Mammary epithelial cell (primary cell): ENCODE measurements at regions of chr17 and their contacts with region 1.

Region 1: DNA sequence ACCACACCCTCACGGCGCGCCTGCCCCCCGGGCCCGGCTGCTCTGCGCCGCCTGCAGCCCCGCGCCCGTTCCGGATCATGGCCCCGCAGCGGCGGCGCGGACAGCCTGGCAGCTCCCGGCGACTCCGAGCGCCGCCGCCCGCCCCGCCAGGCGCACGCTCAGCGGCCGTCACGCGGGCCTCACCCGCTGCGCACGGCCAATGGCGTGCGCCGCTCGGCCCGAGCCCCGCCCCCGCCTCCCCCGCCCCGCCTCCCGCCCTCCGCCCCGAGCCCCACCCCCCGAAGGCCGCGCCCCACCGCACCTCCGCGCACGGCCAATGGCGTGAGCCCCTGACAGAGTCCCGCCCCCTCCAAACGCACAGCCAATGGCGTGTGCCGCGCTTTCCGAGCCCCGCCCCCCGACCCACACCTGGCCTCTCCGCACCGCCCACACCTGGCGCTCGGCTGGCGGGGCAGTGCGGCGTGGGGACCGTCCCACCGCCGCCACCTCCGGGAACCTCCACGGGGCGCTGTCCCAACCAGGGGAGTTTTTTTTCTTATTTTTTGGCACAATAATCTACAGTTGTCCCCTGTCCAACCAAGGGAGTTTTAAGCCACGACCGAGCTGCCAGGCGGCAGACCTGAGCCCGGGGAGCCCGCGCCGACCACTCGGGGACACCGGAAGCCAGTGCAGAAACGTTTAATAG is at the start of gene PCYT2:
- DNase-seq: peak; percentile 85
- H3K4me3 ChIP-seq: peak within 1 kb of the TSS; percentile 81 to 92 (median 83)
- H3K27ac ChIP-seq: peak within 1 kb of the TSS; percentile 19
- H3K4me1 ChIP-seq: peaks cover 12% of the 10 kb centered on the region
- H3K27me3 ChIP-seq: no peaks in the 10 kb centered on the region
- CTCF ChIP-seq: peak in 1 of 2 donors; percentile 2
- total RNA-seq, gene PCYT2: 23.5 to 48.7 TPM

Region 2: DNA sequence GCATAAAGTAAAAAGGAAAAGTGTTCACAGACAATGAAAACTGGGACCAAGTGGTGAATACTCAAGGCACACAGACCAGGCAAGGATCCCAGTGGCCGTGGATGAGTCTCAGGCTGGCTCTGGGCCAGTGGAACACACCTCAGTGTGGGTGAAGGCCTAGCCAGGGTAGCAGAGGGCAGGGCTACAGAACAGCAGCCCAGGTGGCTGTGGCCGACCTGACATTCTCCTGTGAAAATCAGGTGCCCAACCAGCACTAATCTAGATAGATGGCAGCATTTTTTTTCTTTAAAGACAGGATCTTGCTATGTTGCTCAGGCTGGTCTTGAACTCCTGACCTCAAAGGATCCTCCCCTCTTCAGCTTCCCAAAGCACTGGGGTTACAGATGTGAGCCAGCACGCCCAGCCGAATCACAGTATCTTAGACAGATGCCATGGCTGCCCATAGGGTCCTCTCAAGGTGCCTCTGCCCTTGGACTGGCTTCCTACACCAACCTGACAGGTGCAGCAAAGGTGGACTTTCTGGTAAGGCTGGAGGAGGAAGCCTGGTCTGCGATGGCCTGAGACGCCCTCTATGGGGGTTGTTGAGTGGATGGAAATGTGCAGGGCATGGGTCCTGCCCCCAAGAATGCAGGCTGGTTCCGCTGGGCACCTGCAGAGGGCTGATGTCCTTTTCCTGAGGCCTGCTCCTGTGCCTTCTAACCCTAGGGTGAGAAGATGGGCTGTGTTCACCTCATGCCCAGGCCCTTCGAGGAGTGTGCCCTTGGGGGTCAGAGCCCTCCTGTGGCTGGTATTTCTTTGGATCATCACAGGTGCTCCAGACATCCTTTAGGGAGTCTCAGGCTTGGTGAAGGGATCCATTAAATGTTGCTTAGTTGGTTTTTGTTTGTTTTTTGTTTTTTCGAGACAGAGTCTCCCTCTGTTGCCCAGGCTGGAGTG is 47.3 kb before region 1 on chr17:
- CTCF ChIA-PET with region 1: no interaction called
- dilution Hi-C with region 1: no loop called
- in situ Hi-C with region 1: no loop called
- intact Hi-C with region 1: no loop called
- DNase-seq: no peak
- H3K4me3 ChIP-seq: no peak overlapping the region
- H3K27ac ChIP-seq: no peak overlapping the region
- H3K4me1 ChIP-seq: peaks cover 21% of the 10 kb centered on the region
- H3K27me3 ChIP-seq: no peaks in the 10 kb centered on the region
- CTCF ChIP-seq: no peak

Region 3: DNA sequence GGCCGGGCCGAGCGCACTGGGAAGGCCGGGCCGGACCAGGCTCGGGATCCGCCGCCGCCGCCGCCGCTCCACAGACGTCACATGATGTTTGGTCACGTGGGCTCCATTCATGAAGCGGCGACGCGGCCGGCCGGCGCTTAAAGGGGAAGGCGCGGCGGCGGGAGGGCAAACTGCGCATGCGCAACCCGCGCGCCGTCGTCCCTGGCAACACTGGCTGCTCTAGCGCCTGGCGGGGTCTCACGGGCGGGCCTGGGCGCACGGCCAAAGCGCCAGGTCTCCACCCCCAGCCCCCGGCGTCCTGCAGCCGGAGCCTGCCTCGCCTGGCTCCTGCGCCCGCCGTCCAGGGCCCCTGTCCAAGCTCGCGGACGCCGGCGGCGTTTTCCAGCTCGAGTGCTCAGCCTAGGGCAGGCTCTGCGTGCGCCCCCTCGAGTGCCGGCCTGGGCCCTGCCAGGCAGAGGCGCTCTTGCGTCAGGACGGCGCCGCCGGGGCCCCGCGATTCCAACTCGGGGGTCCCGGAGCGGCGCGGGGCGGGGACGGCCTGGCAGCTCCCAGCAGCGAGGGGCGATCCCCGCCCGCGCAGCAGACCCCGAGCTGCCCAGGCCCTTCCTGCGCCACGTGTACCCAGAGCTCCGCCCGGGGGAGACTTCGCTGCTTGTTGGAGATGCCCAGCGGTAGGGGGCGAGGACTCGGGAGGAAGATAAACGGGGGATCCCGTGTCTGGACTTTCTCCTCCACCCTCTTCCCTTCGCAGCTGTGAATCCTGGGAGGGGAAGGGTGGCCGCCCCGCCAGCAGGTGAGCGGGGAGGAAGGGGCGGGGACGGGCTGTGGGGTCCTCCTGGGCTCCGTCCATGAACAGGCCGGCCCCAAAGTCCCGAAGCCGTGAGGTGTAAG is 16.5 kb after region 1 on chr17 and contains the start of gene MAFG:
- CTCF ChIA-PET with region 1: no interaction called
- dilution Hi-C with region 1: no loop called
- in situ Hi-C with region 1: no loop called
- intact Hi-C with region 1: no loop called
- DNase-seq: peak; percentile 87
- H3K4me3 ChIP-seq: peak within 1 kb of the TSS; percentile 70 to 81 (median 72)
- H3K27ac ChIP-seq: peak within 1 kb of the TSS; percentile 73
- H3K4me1 ChIP-seq: peaks cover 37% of the 10 kb centered on the region
- H3K27me3 ChIP-seq: no peaks in the 10 kb centered on the region
- CTCF ChIP-seq: peak in 1 of 2 donors; percentile 27
- total RNA-seq, gene MAFG: 19.8 to 27.9 TPM

Region 4: GRCh38 chr17:81952792-81953228 is 41.4 kb after region 1 on chr17:
- CTCF ChIA-PET with region 1: no interaction called
- dilution Hi-C with region 1: loop called (anchors 5 kb)
- in situ Hi-C with region 1: no loop called
- intact Hi-C with region 1: no loop called
- DNase-seq: no peak
- H3K4me3 ChIP-seq: no peak overlapping the region
- H3K27ac ChIP-seq: no peak overlapping the region
- H3K4me1 ChIP-seq: no peaks in the 10 kb centered on the region
- H3K27me3 ChIP-seq: no peaks in the 10 kb centered on the region
- CTCF ChIP-seq: no peak

Region 5: GRCh38 chr17:81984773-81985410 is 73.5 kb after region 1 on chr17:
- CTCF ChIA-PET with region 1: no interaction called
- dilution Hi-C with region 1: loop called (anchors 5 kb)
- in situ Hi-C with region 1: no loop called
- intact Hi-C with region 1: no loop called
- DNase-seq: no peak
- H3K4me3 ChIP-seq: no peak overlapping the region
- H3K27ac ChIP-seq: no peak overlapping the region
- H3K4me1 ChIP-seq: no peaks in the 10 kb centered on the region
- H3K27me3 ChIP-seq: no peaks in the 10 kb centered on the region
- CTCF ChIP-seq: no peak